ENCODE measurements at regions of chr6 and their contacts with region 1.

Region 1: DNA sequence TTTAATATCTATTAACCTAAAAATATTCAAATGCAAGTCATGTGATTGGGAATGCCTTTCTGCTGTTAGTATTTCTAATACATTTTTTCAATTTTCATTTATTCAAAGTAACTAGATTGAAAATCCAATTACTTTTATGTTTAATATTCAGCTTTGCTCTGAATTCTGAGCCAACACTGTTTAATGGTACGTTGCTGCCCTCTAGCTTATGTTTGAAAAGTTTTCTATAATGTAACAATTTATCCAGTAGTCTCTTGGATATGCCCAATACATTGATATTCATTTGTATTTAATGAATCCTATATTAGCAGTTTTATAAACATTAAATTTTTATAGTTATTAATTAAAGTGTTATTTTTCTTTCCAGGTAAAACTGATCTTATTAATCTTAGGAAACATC is 47.4 kb downstream of the LGSN start:
- DNase-seq: peak; percentile 6
- H3K4me3 Mint-ChIP-seq: no peak overlapping the region
- H3K27ac Mint-ChIP-seq: no peak overlapping the region
- H3K4me1 Mint-ChIP-seq: no peaks in the 10 kb centered on the region
- H3K27me3 Mint-ChIP-seq: peaks cover 28% of the 10 kb centered on the region
- CTCF ChIP-seq: no peak

Region 2: DNA sequence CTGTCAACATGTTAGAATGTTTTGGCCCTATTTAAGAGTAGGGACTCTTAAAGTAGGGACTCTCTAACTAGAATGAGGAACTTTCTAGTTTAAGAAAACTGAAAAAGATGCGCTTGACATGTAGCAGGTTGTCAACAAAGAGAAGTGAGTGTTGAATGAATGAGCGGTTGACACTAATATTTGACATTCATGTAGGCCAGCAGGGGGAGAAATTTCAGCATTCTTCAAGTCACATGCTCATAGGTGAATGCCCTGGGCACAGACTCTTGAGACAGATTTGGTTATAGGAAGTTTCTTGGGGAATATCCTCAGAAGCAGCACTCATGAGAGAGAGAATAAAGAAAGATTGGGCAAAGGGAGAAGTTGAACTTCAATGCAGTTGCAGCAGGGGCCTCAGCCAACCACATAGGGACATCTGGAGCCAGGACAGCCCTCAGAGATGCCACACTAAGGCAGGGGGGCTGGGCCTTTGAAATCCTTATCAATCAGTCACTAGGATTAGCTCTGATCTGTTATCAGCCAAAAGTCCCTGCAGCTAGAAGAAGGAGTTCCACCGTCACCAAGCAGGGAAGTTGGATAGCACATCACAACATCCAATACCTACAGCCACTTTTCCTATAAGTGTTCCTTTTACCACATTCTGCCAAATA is 206.2 kb before region 1 on chr6:
- CTCF ChIA-PET with region 1: no interaction called
- intact Hi-C with region 1: loop called (anchors 2 kb)
- DNase-seq: no peak
- H3K4me3 Mint-ChIP-seq: no peak overlapping the region
- H3K27ac Mint-ChIP-seq: no peak overlapping the region
- H3K4me1 Mint-ChIP-seq: no peaks in the 10 kb centered on the region
- H3K27me3 Mint-ChIP-seq: no peaks in the 10 kb centered on the region
- CTCF ChIP-seq: no peak

Region 3: DNA sequence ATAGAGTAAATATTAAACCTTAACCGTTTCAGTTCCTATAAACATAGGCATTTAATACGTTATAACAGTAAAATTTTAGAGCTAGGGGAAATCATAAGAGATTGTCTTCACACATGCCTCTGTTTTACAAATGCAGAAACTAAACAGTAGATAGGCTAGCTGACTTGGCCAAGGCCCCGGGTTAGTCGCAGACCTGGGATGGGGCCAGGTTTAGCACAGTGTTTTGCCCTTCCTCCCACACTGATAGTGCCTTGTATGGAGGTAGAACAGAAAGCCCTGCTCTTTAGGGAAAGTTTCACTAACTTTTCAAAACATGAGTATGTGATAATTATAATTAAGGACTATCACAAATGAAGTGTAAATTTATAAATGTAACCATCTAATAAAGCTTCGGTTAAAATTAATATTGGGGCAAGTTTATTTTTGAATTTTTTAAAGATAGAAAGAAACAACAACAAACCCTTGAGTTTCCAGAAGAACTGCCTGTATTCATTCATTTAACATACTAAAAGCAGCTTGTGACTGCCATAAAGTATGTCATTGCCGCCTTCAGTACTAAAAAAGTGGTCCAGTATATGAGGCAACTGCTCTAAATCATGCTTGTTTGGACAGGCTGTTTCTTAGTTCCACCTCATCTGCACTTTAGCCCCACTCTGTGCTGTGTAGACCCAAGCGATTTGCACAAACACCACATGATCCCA is 237.4 kb after region 1 on chr6:
- CTCF ChIA-PET with region 1: no interaction called
- intact Hi-C with region 1: no loop called
- DNase-seq: no peak
- H3K4me3 Mint-ChIP-seq: no peak overlapping the region
- H3K27ac Mint-ChIP-seq: no peak overlapping the region
- H3K4me1 Mint-ChIP-seq: peaks cover 28% of the 10 kb centered on the region
- H3K27me3 Mint-ChIP-seq: no peaks in the 10 kb centered on the region
- CTCF ChIP-seq: no peak